Cardiac septum (tissue), 1 donor: ENCODE measurements at regions of chr4 and their contacts with region 1.

Region 1: DNA sequence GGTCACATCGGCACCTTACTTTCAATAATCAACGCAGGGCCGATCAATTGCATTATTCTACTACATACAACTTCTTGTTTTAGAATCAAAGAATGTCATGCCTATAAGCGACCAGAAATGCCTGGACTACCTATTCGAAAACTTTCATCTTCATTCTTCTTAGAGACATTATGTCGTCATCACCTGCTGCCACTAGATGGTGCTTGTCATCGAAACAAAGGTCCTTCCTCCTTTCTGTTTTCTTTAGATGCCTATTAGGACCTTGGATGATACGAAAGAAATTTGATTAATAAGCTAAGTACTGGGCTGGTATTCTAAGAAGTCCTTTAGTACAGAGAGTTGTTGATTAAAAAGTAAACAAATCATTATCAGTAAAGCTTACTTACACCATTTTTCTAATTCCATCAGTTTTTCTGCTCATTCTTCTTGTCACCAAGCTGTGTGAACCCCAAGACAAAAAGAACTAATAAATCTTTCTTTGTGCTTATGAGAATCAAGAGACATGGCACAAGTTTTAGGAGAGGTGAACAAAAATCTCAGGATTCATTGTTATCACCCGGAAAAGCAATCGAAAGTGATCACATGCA is 154.5 kb upstream of the SLC4A4 start:
- DNase-seq: no peak

Region 2: DNA sequence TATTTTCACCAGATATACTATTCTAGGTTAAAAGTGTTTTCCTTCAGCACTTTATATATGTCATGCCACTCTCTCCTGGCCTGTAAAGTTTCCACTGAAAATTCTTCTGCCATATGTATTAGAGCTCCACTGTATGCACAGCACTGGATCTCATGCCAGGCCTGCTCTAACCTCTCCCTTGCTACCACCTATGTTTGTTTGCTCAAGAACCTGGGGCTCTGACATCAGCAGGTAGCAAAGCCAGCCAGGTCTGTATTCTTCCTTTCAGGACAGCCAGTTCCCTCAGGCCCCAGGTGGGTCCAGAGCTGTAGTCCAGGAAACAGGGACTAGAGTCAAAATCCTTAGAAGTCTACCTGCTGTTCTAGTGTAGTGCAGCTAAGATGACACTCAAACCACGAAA is 731.3 kb before region 1 on chr4:
- intact Hi-C with region 1: no loop called
- DNase-seq: no peak

Region 3: DNA sequence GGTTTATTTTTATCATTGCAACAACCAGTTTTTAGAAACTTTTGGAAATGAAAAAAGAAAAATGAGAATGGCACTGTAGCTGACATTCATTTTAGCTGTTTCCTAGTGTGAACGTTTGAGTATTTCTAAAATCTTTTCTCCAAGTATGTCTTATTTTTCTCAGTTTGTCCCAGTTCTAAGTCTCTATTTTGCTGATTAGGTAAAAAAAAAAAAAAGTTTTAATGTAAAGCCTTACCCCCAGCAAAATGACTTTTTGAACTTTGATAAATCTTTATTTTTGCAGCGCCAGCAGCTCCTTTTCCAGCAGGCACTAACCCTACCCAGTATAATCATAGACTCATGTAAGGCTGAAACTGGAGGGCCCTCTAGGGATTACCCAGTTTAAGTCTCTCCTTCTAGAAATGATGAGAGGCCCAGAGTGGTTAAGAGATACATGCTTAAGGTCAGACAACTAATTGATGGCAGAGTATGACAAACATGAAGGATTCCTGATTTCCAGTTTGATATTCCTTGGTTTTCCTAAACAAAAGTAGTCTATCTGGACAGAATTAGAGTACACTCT is 70.2 kb after region 1 on chr4:
- intact Hi-C with region 1: loop called (anchors 5 kb)
- DNase-seq: no peak

Region 4: DNA sequence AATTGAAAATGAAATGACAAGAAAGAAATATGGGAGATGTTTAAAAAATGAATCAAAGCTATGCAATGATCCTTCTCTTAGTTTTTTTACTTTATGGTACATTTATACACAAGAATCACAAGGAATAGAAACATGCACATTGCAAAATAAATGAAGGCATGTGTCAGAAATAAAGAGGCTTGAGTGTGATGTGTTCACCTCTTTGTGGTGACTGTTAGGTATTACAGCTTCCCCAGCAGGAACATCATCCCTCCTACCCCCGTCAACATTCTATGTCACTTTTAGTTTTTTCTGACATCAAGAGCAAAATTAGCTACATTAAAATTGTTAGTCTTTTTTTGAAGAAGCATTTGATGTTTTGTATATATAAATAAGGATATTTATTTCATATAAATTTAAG is 369.3 kb after region 1 on chr4:
- intact Hi-C with region 1: loop called (anchors 2 kb)
- DNase-seq: no peak

Region 5: DNA sequence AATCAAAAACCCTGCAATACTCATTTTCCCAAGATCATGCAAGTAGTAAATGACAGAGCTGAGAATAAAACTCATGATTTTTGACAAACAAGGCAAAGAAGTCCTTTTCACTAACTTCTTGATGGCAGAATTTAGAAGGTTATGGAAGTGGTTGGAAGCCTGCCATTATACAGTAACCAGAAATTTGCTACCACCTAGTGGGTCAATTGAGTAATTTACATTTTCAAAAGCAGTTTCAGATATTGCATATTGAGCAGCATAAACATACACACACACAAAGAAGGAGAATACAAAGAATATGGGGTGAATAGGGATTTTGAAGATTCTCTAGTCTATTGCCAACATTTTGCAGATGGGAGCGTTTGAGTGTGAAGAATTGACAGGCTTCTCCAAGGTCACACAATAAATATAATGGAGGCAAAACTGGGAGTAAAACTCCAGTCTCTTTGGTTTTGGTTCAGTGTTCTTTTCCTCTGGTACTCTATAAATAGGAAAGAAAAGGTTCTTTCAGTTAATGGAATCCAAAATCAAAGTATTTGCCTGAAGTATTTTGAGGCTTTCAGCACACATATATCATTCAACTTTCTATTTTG is 529.4 kb after region 1 on chr4:
- intact Hi-C with region 1: loop called (anchors 5 kb)
- DNase-seq: no peak